ENCODE measurements at regions of chr15 and their contacts with region 1.

Region 1: GRCh38 chr15:73991726-73992593 is at the start of gene STOML1:
- DNase-seq: no peak
- H3K4me3 ChIP-seq: peak within 1 kb of the TSS; percentile 71
- CTCF ChIP-seq: peak; percentile 85

Region 2: GRCh38 chr15:74011610-74012009 is 19.6 kb after region 1 on chr15:
- CTCF ChIA-PET with region 1: interaction called, 50 read pairs
- POLR2A ChIA-PET with region 1: no interaction called
- DNase-seq: no peak
- H3K4me3 ChIP-seq: no peak overlapping the region
- CTCF ChIP-seq: no peak

Region 3: GRCh38 chr15:74019734-74020133 is 27.8 kb after region 1 on chr15:
- CTCF ChIA-PET with region 1: interaction called, 12 read pairs
- POLR2A ChIA-PET with region 1: no interaction called
- DNase-seq: no peak
- H3K4me3 ChIP-seq: no peak overlapping the region
- CTCF ChIP-seq: no peak

Region 4: GRCh38 chr15:74443100-74443909 is 451.3 kb after region 1 on chr15:
- CTCF ChIA-PET with region 1: no interaction called
- POLR2A ChIA-PET with region 1: no interaction called
- DNase-seq: no peak
- H3K4me3 ChIP-seq: no peak overlapping the region
- CTCF ChIP-seq: no peak

Measured in AG04449 (cell line).